WTC11 (cell line): ENCODE measurements at regions of chr1 and their contacts with region 1.

Region 1: DNA sequence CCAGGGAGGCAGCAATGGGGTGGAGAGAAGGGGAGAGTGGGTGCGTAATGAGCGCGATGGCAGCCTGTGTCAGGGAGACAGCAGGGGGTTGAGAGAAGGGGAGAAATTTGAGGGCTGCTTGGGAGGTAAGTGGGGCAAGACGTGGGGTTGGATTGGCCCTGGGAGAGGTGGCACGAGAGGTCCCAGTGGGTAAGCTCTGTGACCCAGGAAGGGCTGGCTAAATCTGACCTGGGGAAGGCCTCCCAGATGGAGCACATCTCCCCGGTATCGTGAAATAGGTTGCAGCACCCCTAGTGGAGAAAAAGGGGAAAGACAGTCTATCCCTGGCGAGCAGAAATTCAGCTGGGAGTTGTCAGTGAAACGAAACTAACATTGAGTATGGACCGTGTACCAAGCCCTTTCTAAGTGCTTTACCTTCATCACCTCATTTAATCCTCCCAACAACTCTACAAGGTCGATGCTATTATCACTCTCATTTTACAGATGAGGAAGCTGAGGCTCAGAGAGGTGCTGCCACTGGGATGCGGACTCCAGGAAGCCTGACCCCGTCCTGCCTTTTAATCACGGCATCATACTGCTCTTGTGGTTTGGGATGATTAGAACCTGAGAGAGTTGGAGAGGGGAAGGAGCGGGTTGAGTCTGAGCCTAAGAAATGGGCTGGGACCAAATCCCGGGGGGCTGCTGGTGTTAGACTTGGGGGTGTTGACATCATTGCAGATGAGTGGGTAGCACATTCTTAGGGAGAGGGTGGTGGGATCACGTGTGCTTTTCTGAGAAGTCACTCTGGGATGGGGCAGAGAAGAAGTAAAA is 56.6 kb upstream of the RPL11 start:
- DNase-seq: peak; percentile 61
- ATAC-seq: peak; percentile 70
- H3K4me3 Mint-ChIP-seq: no peak overlapping the region
- H3K27ac Mint-ChIP-seq: peak overlapping the region; percentile 13; the same call in 1 of the 2 replicates
- H3K4me1 Mint-ChIP-seq: peaks cover 28% of the 10 kb centered on the region
- H3K27me3 Mint-ChIP-seq: no peaks in the 10 kb centered on the region; the same call in 1 of the 2 replicates
- CTCF ChIP-seq: peak; percentile 82

Region 2: DNA sequence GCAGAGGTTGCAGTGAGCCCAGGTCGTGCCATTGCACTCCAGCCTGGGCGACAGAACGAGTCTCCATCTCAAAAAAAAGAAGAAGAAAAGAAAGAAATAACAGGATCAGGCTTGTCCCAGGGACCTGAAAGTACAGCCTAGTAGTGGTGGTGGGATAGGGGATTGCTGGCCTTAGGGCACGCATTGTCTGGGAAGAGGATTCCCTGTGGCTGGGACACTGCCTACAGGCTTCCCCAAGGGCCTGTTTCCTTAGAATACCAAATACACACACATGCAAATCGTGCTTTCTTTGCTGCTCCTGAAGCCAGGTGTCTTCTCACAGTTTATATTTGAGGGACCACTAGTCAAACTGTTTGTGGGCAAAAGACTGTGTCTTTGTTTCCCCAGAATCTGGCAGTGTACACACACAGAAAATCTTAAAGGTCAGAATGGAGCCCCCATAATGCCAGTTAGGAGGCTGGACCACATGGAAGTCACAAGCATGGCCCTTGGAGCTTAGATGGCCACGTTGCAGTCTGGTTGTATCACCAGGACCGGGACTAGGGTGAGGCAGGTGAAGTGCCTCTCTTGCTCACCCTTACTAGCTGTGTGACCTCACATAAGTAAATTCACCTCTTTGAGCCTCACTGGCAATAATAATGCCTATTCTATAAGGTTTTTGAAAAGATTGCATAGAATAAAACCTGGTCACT is 138.4 kb before region 1 on chr1:
- CTCF ChIA-PET with region 1: interaction called, 31 read pairs
- POLR2A ChIA-PET with region 1: no interaction called
- DNase-seq: no peak
- ATAC-seq: peak; percentile 51
- H3K4me3 Mint-ChIP-seq: no peak overlapping the region
- H3K27ac Mint-ChIP-seq: no peak overlapping the region
- H3K4me1 Mint-ChIP-seq: peaks cover 12% of the 10 kb centered on the region
- H3K27me3 Mint-ChIP-seq: peaks cover 4% of the 10 kb centered on the region
- CTCF ChIP-seq: no peak

Region 3: GRCh38 chr1:23539698-23540266 is 95.3 kb before region 1 on chr1:
- CTCF ChIA-PET with region 1: interaction called, 201 read pairs
- POLR2A ChIA-PET with region 1: interaction called, 8 read pairs
- DNase-seq: peak; percentile 97
- ATAC-seq: peak; percentile 95
- H3K4me3 Mint-ChIP-seq: no peak overlapping the region
- H3K27ac Mint-ChIP-seq: peak overlapping the region; percentile 64; the same call in 1 of the 2 replicates
- H3K4me1 Mint-ChIP-seq: peaks cover 10% of the 10 kb centered on the region
- H3K27me3 Mint-ChIP-seq: no peaks in the 10 kb centered on the region; the same call in 1 of the 2 replicates
- CTCF ChIP-seq: peak; percentile 76

Region 4: GRCh38 chr1:23577056-23578004 is 57.7 kb before region 1 on chr1:
- CTCF ChIA-PET with region 1: interaction called, 25 read pairs
- POLR2A ChIA-PET with region 1: no interaction called
- DNase-seq: no peak
- ATAC-seq: no peak
- H3K4me3 Mint-ChIP-seq: no peak overlapping the region
- H3K27ac Mint-ChIP-seq: no peak overlapping the region
- H3K4me1 Mint-ChIP-seq: peaks cover 34% of the 10 kb centered on the region
- H3K27me3 Mint-ChIP-seq: no peaks in the 10 kb centered on the region
- CTCF ChIP-seq: no peak

Region 5: DNA sequence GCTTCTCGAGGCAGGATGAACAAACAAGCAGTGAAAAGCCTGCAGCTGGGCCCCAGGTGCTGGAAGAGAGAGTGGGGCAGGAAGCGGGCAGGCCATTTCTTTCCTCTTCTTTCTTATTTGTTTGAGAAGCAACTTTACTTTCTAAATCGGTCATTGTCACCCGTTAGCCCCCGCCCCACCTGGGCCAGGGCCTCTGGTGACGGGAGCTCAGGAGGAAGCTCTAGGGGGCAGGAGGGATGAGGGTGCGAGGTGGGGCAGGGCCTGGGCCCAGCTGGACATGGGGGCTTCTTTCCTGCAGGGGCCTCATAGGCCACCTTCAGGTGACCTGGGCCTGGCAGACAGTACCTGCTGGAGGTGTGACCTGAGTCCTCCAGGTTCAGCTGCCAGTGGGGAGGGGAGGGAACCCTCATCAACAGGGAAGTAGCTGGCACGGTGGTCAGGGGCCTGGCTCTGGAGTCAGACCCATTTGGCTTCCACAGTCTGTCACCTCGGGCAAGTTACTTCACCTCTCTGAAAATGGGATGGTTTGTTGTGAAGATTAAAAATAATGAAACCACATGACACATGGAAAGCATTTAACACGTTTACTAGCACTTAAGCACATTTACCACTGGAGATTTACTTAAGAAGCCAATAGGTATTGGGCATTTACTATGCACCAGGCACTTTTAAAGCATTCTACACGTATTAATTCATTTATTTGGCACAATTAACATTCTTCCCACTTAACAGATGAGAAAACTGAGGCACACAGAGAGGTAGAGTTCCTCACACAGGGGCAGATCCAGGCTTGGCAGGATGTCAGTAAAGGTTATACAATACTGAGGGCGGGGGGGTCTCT is 21.6 kb before region 1 on chr1:
- CTCF ChIA-PET with region 1: interaction called, 40 read pairs
- POLR2A ChIA-PET with region 1: no interaction called
- DNase-seq: no peak
- ATAC-seq: peak; percentile 9; the same call in 1 of the 2 replicates
- H3K4me3 Mint-ChIP-seq: no peak overlapping the region
- H3K27ac Mint-ChIP-seq: peak overlapping the region; percentile 28
- H3K4me1 Mint-ChIP-seq: peaks cover 28% of the 10 kb centered on the region
- H3K27me3 Mint-ChIP-seq: peaks cover 2% of the 10 kb centered on the region
- CTCF ChIP-seq: no peak

Region 6: DNA sequence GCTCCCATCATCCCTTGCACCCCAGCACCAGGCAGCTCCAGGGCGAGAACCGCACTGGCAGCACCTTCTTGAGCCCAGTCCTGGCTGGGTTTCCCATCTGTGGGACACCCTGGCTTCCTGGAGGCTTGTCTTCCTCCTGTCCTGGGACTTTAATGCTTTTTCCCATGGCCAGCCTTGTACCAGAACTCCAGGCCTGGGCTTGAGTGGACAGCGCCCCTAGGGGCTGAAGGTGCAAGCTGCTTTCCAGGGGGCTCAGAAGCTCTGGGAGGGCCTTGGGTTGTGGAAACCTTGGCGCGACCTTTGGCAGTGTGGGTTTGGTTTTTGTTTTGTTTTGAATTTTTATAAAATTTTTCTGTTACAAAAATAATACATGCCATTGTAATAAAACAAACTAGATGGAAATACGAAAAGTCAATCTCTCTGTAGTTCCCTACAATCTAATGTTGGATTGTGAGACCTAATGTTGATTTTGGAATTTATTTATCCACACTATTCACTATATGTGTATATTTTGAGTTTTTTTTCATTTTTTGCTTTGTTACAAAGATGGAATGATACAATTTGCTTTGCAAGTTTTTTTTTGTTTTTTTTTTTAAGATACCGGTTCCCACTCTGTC is 22.7 kb after region 1 on chr1:
- CTCF ChIA-PET with region 1: interaction called, 59 read pairs
- POLR2A ChIA-PET with region 1: interaction called, 8 read pairs
- DNase-seq: peak; percentile 89
- ATAC-seq: peak; percentile 97
- H3K4me3 Mint-ChIP-seq: no peak overlapping the region
- H3K27ac Mint-ChIP-seq: no peak overlapping the region
- H3K4me1 Mint-ChIP-seq: peaks cover 3% of the 10 kb centered on the region
- H3K27me3 Mint-ChIP-seq: no peaks in the 10 kb centered on the region
- CTCF ChIP-seq: peak; percentile 95

Region 7: GRCh38 chr1:23718482-23718881 is 83.4 kb after region 1 on chr1:
- CTCF ChIA-PET with region 1: interaction called, 14 read pairs
- POLR2A ChIA-PET with region 1: no interaction called
- DNase-seq: peak; percentile 76
- ATAC-seq: peak; percentile 99
- H3K4me3 Mint-ChIP-seq: no peak overlapping the region
- H3K27ac Mint-ChIP-seq: no peak overlapping the region
- H3K4me1 Mint-ChIP-seq: peaks cover 8% of the 10 kb centered on the region
- H3K27me3 Mint-ChIP-seq: no peaks in the 10 kb centered on the region
- CTCF ChIP-seq: peak; percentile 61